Mammary epithelial cell (primary cell): ENCODE measurements at regions of chr4 and their contacts with region 1.

Region 1: GRCh38 chr4:124334119-124334518 is 378.4 kb downstream of the ANKRD50 start:
- DNase-seq: peak; percentile 81
- H3K4me3 ChIP-seq: no peak overlapping the region
- H3K27ac ChIP-seq: no peak overlapping the region
- H3K4me1 ChIP-seq: no peaks in the 10 kb centered on the region
- H3K27me3 ChIP-seq: peaks cover 1% of the 10 kb centered on the region
- CTCF ChIP-seq: peak; percentile 53 to 67

Region 2: GRCh38 chr4:124262211-124263179 is 71.6 kb before region 1 on chr4:
- CTCF ChIA-PET with region 1: no interaction called
- dilution Hi-C with region 1: no loop called
- in situ Hi-C with region 1: no loop called
- intact Hi-C with region 1: no loop called
- DNase-seq: peak; percentile 64
- H3K4me3 ChIP-seq: no peak overlapping the region
- H3K27ac ChIP-seq: no peak overlapping the region
- H3K4me1 ChIP-seq: no peaks in the 10 kb centered on the region
- H3K27me3 ChIP-seq: no peaks in the 10 kb centered on the region
- CTCF ChIP-seq: peak; percentile 90 to 93

Region 3: GRCh38 chr4:125070484-125071260 is 736.6 kb after region 1 on chr4:
- CTCF ChIA-PET with region 1: no interaction called
- dilution Hi-C with region 1: no loop called
- in situ Hi-C with region 1: no loop called
- intact Hi-C with region 1: loop called (anchors 10 kb)
- DNase-seq: no peak
- H3K4me3 ChIP-seq: no peak overlapping the region
- H3K27ac ChIP-seq: no peak overlapping the region
- H3K4me1 ChIP-seq: no peaks in the 10 kb centered on the region
- H3K27me3 ChIP-seq: no peaks in the 10 kb centered on the region
- CTCF ChIP-seq: peak in 1 of 2 donors; percentile 30

Region 4: GRCh38 chr4:125244848-125245450 is 910.8 kb after region 1 on chr4:
- CTCF ChIA-PET with region 1: no interaction called
- dilution Hi-C with region 1: no loop called
- in situ Hi-C with region 1: loop called (anchors 10 to 25 kb)
- intact Hi-C with region 1: loop called (anchors 1 kb)
- DNase-seq: peak; percentile 14
- H3K4me3 ChIP-seq: no peak overlapping the region
- H3K27ac ChIP-seq: no peak overlapping the region
- H3K4me1 ChIP-seq: peaks cover 7% of the 10 kb centered on the region
- H3K27me3 ChIP-seq: no peaks in the 10 kb centered on the region
- CTCF ChIP-seq: peak; percentile 27 to 36

Region 5: GRCh38 chr4:125283707-125284279 is 949.7 kb after region 1 on chr4:
- CTCF ChIA-PET with region 1: interaction called, 6 read pairs
- dilution Hi-C with region 1: no loop called
- in situ Hi-C with region 1: no loop called
- intact Hi-C with region 1: loop called (anchors 1 kb)
- DNase-seq: peak; percentile 12
- H3K4me3 ChIP-seq: no peak overlapping the region
- H3K27ac ChIP-seq: no peak overlapping the region
- H3K4me1 ChIP-seq: no peaks in the 10 kb centered on the region
- H3K27me3 ChIP-seq: no peaks in the 10 kb centered on the region
- CTCF ChIP-seq: peak; percentile 26 to 44